Activated CD4-positive, alpha-beta memory T cell treated with anti-CD3 and anti-CD28 coated beads for 36 hours (primary cell): ENCODE measurements at regions of chr3 and their contacts with region 1.

Region 1: GRCh38 chr3:52444860-52445793 is at the start of gene SEMA3G:
- DNase-seq: peak; percentile 87
- H3K4me3 Mint-ChIP-seq: no peak within 1 kb of the TSS
- H3K27ac Mint-ChIP-seq: no peak within 1 kb of the TSS
- H3K4me1 Mint-ChIP-seq: peaks cover 10% of the 10 kb centered on the region
- H3K27me3 Mint-ChIP-seq: no peaks in the 10 kb centered on the region
- total RNA-seq, gene SEMA3G: 0.10 to 0.14 TPM

Region 2: GRCh38 chr3:52253314-52254304 is 191.5 kb before region 1 on chr3:
- CTCF ChIA-PET with region 1: interaction called, 4 read pairs
- POLR2A ChIA-PET with region 1: interaction called, 10 read pairs
- intact Hi-C with region 1: no loop called
- DNase-seq: peak; percentile 93
- H3K4me3 Mint-ChIP-seq: peak overlapping the region; percentile 71
- H3K27ac Mint-ChIP-seq: peak overlapping the region; percentile 97
- H3K4me1 Mint-ChIP-seq: peaks cover 88% of the 10 kb centered on the region
- H3K27me3 Mint-ChIP-seq: no peaks in the 10 kb centered on the region

Region 3: DNA sequence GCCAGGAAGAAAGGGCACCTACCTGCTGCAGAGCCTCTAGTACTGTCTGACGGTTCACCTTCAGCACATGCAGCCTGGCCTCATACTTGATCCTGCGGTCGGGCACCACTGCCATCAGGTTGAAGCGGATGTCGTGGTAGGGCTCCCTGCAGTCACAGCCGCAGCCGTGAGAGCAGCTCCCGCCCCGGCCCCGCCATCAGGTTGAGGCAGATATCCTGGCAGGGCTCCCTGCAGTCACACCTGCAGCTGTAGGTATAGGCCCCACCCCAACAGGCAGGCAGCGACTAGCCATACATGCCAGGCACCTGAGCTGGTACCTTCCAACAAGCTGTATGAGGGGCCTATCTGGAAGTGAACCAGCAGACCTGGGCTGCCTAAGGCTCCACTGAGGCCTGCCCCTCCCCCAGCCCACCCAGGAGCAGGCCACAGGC is 38.9 kb before region 1 on chr3:
- CTCF ChIA-PET with region 1: interaction called, 3 read pairs
- POLR2A ChIA-PET with region 1: no interaction called
- intact Hi-C with region 1: loop called (anchors 1 kb)
- DNase-seq: no peak
- H3K4me3 Mint-ChIP-seq: no peak overlapping the region
- H3K27ac Mint-ChIP-seq: no peak overlapping the region
- H3K4me1 Mint-ChIP-seq: peaks cover 16% of the 10 kb centered on the region
- H3K27me3 Mint-ChIP-seq: no peaks in the 10 kb centered on the region

Region 4: GRCh38 chr3:52420388-52420787 is 24.7 kb before region 1 on chr3:
- CTCF ChIA-PET with region 1: interaction called, 172 read pairs
- POLR2A ChIA-PET with region 1: no interaction called
- intact Hi-C with region 1: no loop called
- DNase-seq: no peak
- H3K4me3 Mint-ChIP-seq: no peak overlapping the region
- H3K27ac Mint-ChIP-seq: no peak overlapping the region
- H3K4me1 Mint-ChIP-seq: peaks cover 2% of the 10 kb centered on the region
- H3K27me3 Mint-ChIP-seq: no peaks in the 10 kb centered on the region

Region 5: DNA sequence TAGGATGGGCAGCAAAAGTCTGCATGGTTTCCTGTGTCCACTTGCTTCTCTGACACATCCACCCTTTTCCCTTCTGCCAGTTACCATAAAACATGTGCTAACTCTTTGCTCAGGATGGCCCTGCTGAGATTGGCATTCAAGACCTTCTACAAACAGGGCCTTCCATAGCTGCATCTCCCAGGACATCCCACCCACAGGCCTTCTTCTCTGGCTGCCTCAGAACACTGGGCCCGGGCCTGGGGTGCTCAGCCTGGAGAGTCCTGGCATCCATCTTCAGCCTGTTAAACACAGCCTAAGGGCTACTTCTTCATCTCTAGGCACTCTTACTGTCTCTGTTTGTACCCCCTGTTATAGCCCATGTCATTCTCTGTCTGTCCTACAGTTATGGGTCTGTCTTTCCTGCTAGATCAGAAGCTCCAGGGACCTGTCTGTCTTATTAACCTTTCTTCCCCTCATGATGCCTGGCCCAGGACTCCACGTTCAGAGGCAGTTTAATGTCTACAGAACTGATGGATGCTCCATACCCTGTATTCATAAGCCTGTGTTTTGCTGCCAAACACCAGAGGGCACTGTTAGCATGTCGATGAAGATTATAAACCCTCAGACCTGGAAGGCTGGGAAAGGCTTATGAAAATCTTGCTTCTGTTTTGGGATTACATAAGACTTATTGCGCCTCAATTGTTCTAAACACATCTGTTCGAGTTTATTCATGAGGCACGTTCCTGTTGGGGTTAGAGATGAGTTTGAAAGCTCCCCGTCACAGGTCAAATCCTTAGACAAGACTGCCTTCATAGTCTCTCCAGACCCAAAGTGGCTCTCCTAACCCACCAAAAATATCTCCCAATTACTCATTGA is 16.7 kb before region 1 on chr3:
- CTCF ChIA-PET with region 1: interaction called, 172 read pairs
- POLR2A ChIA-PET with region 1: no interaction called
- intact Hi-C with region 1: loop called (anchors 1 kb)
- DNase-seq: peak; percentile 37
- H3K4me3 Mint-ChIP-seq: no peak overlapping the region
- H3K27ac Mint-ChIP-seq: no peak overlapping the region
- H3K4me1 Mint-ChIP-seq: peaks cover 3% of the 10 kb centered on the region
- H3K27me3 Mint-ChIP-seq: no peaks in the 10 kb centered on the region

Region 6: GRCh38 chr3:52455283-52456168 is 10.4 kb after region 1 on chr3 and contains the start of gene NISCH:
- CTCF ChIA-PET with region 1: interaction called, 24 read pairs
- POLR2A ChIA-PET with region 1: interaction called, 3 read pairs
- intact Hi-C with region 1: no loop called
- DNase-seq: peak; percentile 97
- H3K4me3 Mint-ChIP-seq: peak within 1 kb of the TSS; percentile 89
- H3K27ac Mint-ChIP-seq: peak within 1 kb of the TSS; percentile 87
- H3K4me1 Mint-ChIP-seq: peaks cover 35% of the 10 kb centered on the region
- H3K27me3 Mint-ChIP-seq: no peaks in the 10 kb centered on the region
- total RNA-seq, gene NISCH: 50.8 to 60.2 TPM